T-cell (primary cell): ENCODE measurements at regions of chr20 and their contacts with region 1.

Region 1: DNA sequence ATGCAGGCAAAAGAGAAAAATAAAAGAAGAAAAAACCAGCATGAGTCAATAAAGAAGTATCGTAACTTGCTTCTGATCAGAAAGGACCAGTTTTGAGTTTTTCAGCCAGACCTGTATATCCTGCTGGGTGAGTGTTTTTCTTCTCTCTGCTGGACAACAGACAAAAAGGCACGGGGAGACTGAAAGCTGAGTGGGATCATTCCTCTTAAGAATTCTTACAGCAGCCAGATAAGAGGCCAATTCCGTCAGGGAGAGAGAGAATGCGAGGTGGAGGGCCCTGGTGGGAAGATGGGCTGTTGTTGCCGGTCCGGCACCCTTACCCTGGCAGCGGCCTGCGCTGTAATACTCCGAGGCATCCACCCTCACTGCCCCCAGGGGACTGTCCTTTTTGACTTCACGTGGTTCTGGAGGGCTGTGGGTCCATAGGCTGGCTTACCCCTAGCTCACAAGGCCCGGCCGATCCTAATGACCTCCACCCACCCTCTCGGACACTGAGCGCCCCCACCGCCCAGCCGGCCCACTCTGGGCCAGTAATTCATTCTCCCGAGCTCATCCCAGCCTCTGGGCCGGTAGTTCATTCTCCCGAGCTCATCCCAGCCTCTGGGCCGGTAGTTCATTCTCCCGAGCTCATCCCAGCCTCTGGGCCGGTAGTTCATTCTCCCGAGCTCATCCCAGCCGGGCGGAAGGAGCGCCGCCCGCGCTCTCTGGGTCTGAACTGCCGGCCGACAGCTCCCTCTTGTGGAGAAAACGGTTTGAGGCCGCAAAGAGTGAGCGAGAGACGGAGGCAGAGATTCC is 118.3 kb upstream of the SIRPA start:
- DNase-seq: peak; percentile 50 to 89 (median 75)
- ATAC-seq: peak; percentile 88 to 97 (median 94)
- H3K4me3 ChIP-seq: peak overlapping the region; percentile 82 to 86
- H3K4me3 Mint-ChIP-seq: peak overlapping the region; percentile 77 to 85 (median 78)
- H3K27ac ChIP-seq: peak overlapping the region; percentile 15
- H3K27ac Mint-ChIP-seq: peak overlapping the region in 1 of 2 donors; percentile 46
- H3K4me1 ChIP-seq: peaks cover 6 to 14% of the 10 kb centered on the region in 2 experiments
- H3K4me1 Mint-ChIP-seq: peaks cover 15 to 17% (median 15%) of the 10 kb centered on the region in 3 donors
- H3K27me3 ChIP-seq: peaks cover 0 to 30% of the 10 kb centered on the region in 2 experiments
- H3K27me3 Mint-ChIP-seq: peaks cover 7 to 17% of the 10 kb centered on the region in 2 donors

Region 2: GRCh38 chr20:1503564-1504227 is 273.2 kb before region 1 on chr20:
- CTCF ChIA-PET with region 1: interaction called, 6 to 15 read pairs
- POLR2A ChIA-PET with region 1: no interaction called
- DNase-seq: peak; percentile 38 to 90 (median 71)
- ATAC-seq: peak; percentile 99 to 100 (median 100)
- H3K4me3 ChIP-seq: no peak overlapping the region
- H3K4me3 Mint-ChIP-seq: no peak overlapping the region
- H3K27ac ChIP-seq: no peak overlapping the region
- H3K27ac Mint-ChIP-seq: no peak overlapping the region
- H3K4me1 ChIP-seq: no peaks in the 10 kb centered on the region
- H3K4me1 Mint-ChIP-seq: peaks cover 3 to 6% (median 4%) of the 10 kb centered on the region in 3 donors
- H3K27me3 ChIP-seq: peaks cover 0 to 18% of the 10 kb centered on the region in 2 experiments
- H3K27me3 Mint-ChIP-seq: peaks cover 30 to 40% of the 10 kb centered on the region in 2 donors

Region 3: DNA sequence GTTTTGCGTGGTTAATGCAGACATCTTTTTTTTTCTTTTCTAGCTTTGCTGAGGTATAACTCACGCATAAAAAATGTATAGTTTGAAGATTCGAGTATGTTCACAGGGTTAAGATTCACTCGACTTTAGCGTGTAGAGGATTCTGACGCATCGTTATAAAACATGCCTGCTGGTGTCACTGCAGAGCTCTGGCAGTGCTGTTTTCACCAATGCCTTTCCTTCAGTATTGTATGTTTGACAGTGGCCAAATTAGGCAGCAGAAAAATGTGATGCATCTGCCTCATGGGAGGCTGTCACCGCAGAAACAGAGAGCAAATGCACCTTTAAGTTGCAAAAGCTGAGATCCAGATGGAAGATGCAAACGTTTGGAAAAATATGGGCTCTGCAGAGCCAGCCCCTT is 267.6 kb before region 1 on chr20:
- CTCF ChIA-PET with region 1: interaction called, 6 to 15 read pairs
- POLR2A ChIA-PET with region 1: no interaction called
- DNase-seq: peak in 25 of 35 experiments; percentile 10 to 49 (median 24)
- ATAC-seq: peak; percentile 71 to 78 (median 73)
- H3K4me3 ChIP-seq: no peak overlapping the region
- H3K4me3 Mint-ChIP-seq: no peak overlapping the region
- H3K27ac ChIP-seq: no peak overlapping the region
- H3K27ac Mint-ChIP-seq: no peak overlapping the region
- H3K4me1 ChIP-seq: no peaks in the 10 kb centered on the region
- H3K4me1 Mint-ChIP-seq: peaks cover 0 to 6% (median 3%) of the 10 kb centered on the region in 3 donors
- H3K27me3 ChIP-seq: peaks cover 0 to 10% of the 10 kb centered on the region in 2 experiments
- H3K27me3 Mint-ChIP-seq: peaks cover 6 to 10% of the 10 kb centered on the region in 2 donors

Region 4: GRCh38 chr20:1533059-1533458 is 243.8 kb before region 1 on chr20:
- CTCF ChIA-PET with region 1: interaction called, 6 to 15 read pairs
- POLR2A ChIA-PET with region 1: no interaction called
- DNase-seq: peak in 1 of 35 experiments; percentile 38
- ATAC-seq: peak in 1 of 4 experiments; percentile 43
- H3K4me3 ChIP-seq: no peak overlapping the region
- H3K4me3 Mint-ChIP-seq: no peak overlapping the region
- H3K27ac ChIP-seq: no peak overlapping the region
- H3K27ac Mint-ChIP-seq: no peak overlapping the region
- H3K4me1 ChIP-seq: no peaks in the 10 kb centered on the region
- H3K4me1 Mint-ChIP-seq: peaks cover 4 to 16% (median 9%) of the 10 kb centered on the region in 3 donors
- H3K27me3 ChIP-seq: peaks cover 0 to 5% of the 10 kb centered on the region in 2 experiments
- H3K27me3 Mint-ChIP-seq: peaks cover 0 to 8% of the 10 kb centered on the region in 2 donors

Region 5: DNA sequence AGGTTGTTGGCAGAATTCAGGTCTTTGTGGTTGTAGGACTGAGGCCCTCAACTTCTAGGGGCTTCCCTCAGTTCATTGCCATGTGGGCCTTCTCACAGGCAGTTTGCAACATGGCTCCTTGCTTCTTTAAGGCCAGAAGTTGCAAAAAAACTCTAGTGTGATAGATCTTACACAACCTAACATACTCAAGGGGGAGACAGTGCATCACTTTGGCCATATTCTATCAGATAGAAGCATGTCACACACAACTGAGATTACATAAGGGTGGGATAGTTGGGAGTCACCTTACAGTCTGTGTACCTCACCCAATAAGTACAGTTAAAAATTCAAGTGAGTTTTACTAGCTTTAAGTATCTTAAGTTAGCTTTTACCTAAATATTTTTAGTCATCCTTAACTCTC is 220.9 kb before region 1 on chr20:
- CTCF ChIA-PET with region 1: interaction called, 9 to 20 read pairs
- POLR2A ChIA-PET with region 1: no interaction called
- DNase-seq: peak in 2 of 35 experiments; percentile 6 to 54
- ATAC-seq: peak in 3 of 4 experiments; percentile 62 to 68 (median 63)
- H3K4me3 ChIP-seq: no peak overlapping the region
- H3K4me3 Mint-ChIP-seq: no peak overlapping the region
- H3K27ac ChIP-seq: no peak overlapping the region
- H3K27ac Mint-ChIP-seq: peak overlapping the region in 1 of 2 donors; percentile 41
- H3K4me1 ChIP-seq: no peaks in the 10 kb centered on the region
- H3K4me1 Mint-ChIP-seq: peaks cover 7 to 10% (median 8%) of the 10 kb centered on the region in 3 donors
- H3K27me3 ChIP-seq: no peaks in the 10 kb centered on the region
- H3K27me3 Mint-ChIP-seq: peaks cover 0 to 3% of the 10 kb centered on the region in 2 donors

Region 6: DNA sequence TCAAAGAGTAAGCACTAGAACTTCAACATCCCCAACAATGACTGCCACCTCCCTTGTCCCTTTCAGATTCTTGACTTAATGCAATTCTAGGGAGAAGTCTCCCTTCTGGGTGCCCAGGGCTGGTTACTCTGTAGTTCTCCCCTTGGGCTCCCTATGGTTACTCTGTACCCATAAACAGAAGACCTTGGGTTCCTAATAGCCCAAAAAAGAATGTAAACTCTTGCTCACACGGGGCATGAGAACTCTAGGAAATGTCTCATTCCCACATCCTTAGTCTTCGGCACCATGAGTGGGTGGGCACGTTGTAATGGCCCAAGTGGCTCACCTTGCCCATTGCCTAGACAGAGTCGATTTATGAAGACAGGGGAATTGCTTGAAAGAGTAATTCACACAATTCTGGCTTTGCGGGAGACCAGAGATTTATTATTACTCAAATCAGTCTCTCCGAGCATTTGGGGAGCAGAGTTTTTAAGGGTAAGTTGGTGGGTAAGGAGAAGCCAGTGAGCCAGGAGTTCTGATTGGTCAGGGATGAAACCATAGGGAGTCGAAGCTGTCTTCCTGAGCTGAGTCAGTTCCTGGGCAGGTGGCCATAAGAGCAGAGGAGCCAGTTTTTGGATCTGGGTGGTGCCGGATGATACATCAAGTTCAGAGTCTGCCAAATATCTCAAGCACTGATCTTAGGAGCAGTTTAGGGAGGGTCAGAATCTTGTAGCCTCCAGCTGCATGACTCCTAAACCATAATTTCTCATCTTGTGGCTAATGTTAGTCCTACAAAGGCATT is 58.1 kb before region 1 on chr20:
- CTCF ChIA-PET with region 1: no interaction called
- POLR2A ChIA-PET with region 1: no interaction called
- DNase-seq: no peak
- ATAC-seq: no peak
- H3K4me3 ChIP-seq: no peak overlapping the region
- H3K4me3 Mint-ChIP-seq: no peak overlapping the region
- H3K27ac ChIP-seq: no peak overlapping the region
- H3K27ac Mint-ChIP-seq: no peak overlapping the region
- H3K4me1 ChIP-seq: no peaks in the 10 kb centered on the region
- H3K4me1 Mint-ChIP-seq: peaks cover 12 to 23% (median 17%) of the 10 kb centered on the region in 3 donors
- H3K27me3 ChIP-seq: no peaks in the 10 kb centered on the region
- H3K27me3 Mint-ChIP-seq: no peaks in the 10 kb centered on the region

Region 7: DNA sequence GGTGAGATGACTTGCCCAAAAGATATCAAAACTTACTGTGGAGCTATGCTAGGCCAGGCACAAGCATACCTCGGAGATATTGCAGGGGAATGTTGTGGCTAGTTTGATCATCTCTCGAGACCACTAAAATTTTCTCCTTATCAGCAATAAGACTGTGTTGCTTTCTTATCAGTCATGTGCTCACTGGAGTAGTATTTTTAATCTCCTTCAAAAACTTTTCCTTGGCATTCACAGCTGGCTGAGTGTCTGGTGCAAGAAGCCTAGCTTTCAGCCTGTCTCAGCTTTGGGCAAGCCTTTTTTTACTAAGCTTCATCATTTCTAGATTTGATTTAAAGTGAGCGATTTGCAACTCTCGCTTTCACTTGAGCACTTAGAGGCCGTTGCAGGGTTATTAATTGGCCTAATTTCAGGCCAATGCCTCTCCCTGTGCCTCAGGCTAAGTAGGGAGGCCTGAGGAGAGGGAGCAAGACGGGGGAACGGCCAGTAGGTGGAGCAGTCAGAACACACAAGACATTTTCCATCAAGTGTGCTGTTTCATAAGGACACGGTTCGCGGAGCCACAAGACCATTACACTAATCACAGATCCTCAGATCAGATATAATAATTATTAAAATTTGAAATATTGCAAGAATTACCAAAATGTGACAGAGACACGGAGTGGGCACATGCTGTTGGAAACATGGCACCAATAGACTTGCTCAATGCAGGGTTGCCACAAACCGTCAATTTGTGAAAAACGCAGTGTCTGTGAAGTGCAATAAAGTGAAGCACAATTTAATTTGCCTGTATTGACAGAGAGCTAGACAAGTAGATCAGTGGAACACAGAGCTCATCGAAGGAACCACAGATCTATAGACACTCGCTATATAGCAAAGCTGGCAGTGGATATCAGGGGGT is 12.5 kb before region 1 on chr20:
- CTCF ChIA-PET with region 1: interaction called, 8 to 15 read pairs
- POLR2A ChIA-PET with region 1: no interaction called
- DNase-seq: peak in 32 of 35 experiments; percentile 16 to 73 (median 43)
- ATAC-seq: peak; percentile 61 to 77 (median 68)
- H3K4me3 ChIP-seq: no peak overlapping the region
- H3K4me3 Mint-ChIP-seq: no peak overlapping the region
- H3K27ac ChIP-seq: no peak overlapping the region
- H3K27ac Mint-ChIP-seq: no peak overlapping the region
- H3K4me1 ChIP-seq: no peaks in the 10 kb centered on the region
- H3K4me1 Mint-ChIP-seq: peaks cover 0 to 2% (median 0%) of the 10 kb centered on the region in 3 donors
- H3K27me3 ChIP-seq: peaks cover 0 to 3% of the 10 kb centered on the region in 2 experiments
- H3K27me3 Mint-ChIP-seq: peaks cover 7 to 13% of the 10 kb centered on the region in 2 donors